ENCODE measurements at regions of chr1 and their contacts with region 1.

Region 1: GRCh38 chr1:227787513-227788270 is 27.8 kb upstream of the PRSS38 start:
- DNase-seq: peak; percentile 88 to 98 (median 93)
- H3K4me3 ChIP-seq: peak overlapping the region; percentile 73
- H3K4me3 Mint-ChIP-seq: peak overlapping the region; percentile 81 to 95 (median 86)
- H3K27ac ChIP-seq: peak overlapping the region; percentile 33
- H3K27ac Mint-ChIP-seq: peak overlapping the region; percentile 47 to 94 (median 78)
- H3K4me1 ChIP-seq: peaks cover 16% of the 10 kb centered on the region
- H3K4me1 Mint-ChIP-seq: peaks cover 5 to 29% (median 14%) of the 10 kb centered on the region in 3 donors
- H3K27me3 ChIP-seq: no peaks in the 10 kb centered on the region
- H3K27me3 Mint-ChIP-seq: no peaks in the 10 kb centered on the region

Region 2: DNA sequence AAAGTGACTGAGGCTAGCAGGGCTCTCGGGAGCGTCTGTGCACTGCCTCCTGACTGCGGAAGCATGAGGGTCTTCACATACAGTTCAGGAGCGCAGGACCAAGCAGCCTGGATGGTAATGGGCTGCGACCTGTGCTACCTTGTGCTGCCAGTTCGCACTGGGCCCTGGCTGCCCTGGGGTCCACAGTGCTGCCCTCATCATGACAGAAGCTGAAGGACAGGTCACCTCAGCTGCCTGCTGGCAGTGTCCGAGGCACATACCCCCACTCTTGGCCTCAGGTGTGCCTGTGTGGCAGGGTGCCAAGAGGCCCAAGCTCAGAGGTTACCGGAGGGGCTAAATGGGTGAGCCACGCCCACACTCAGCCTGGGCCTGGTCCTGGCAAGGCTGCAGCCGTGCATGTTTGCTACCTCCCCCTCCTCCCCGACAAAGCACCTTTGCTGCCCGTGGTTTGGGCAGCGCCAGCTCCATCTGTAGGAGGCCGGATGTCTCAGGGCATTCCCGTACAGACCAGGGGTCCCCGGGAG is 57.0 kb before region 1 on chr1:
- CTCF ChIA-PET with region 1: no interaction called
- POLR2A ChIA-PET with region 1: no interaction called
- DNase-seq: no peak
- H3K4me3 ChIP-seq: no peak overlapping the region
- H3K4me3 Mint-ChIP-seq: peak overlapping the region in 4 of 7 donors; percentile 62 to 86 (median 70)
- H3K27ac ChIP-seq: no peak overlapping the region
- H3K27ac Mint-ChIP-seq: peak overlapping the region in 4 of 8 donors; percentile 32 to 85 (median 60)
- H3K4me1 ChIP-seq: peaks cover 28% of the 10 kb centered on the region
- H3K4me1 Mint-ChIP-seq: peaks cover 25 to 50% (median 35%) of the 10 kb centered on the region in 3 donors
- H3K27me3 ChIP-seq: no peaks in the 10 kb centered on the region
- H3K27me3 Mint-ChIP-seq: no peaks in the 10 kb centered on the region

Region 3: DNA sequence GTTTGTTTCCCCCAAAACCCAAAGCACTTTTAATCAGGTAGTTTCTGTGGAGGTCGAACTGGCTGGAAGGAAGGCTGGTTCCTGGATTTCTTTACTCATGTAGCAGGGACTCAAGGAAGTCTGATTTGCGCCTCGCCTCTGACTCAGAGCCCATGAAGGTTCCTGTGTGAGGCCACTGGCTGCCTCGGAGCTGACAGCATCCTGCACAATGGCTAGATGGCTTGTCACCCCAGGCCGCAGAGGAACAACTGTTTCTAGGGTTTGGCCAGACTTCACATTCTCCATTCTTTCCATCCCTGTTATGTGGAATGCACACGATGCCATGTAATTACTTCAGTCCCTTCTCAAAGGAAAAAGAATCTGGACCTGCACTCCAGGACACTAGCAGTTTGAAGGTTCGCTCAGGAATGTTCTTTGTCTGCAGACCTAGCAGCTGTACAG is 11.3 kb before region 1 on chr1:
- CTCF ChIA-PET with region 1: interaction called, 13 read pairs
- POLR2A ChIA-PET with region 1: interaction called, 13 read pairs
- DNase-seq: no peak
- H3K4me3 ChIP-seq: no peak overlapping the region
- H3K4me3 Mint-ChIP-seq: peak overlapping the region in 4 of 7 donors; percentile 12 to 32 (median 14)
- H3K27ac ChIP-seq: no peak overlapping the region
- H3K27ac Mint-ChIP-seq: peak overlapping the region in 3 of 8 donors; percentile 22 to 63 (median 34)
- H3K4me1 ChIP-seq: peaks cover 29% of the 10 kb centered on the region
- H3K4me1 Mint-ChIP-seq: peaks cover 30 to 49% (median 30%) of the 10 kb centered on the region in 3 donors
- H3K27me3 ChIP-seq: no peaks in the 10 kb centered on the region
- H3K27me3 Mint-ChIP-seq: no peaks in the 10 kb centered on the region

Region 4: GRCh38 chr1:227823537-227823936 is 35.8 kb after region 1 on chr1:
- CTCF ChIA-PET with region 1: no interaction called
- POLR2A ChIA-PET with region 1: no interaction called
- DNase-seq: no peak
- H3K4me3 ChIP-seq: no peak overlapping the region
- H3K4me3 Mint-ChIP-seq: no peak overlapping the region
- H3K27ac ChIP-seq: no peak overlapping the region
- H3K27ac Mint-ChIP-seq: no peak overlapping the region
- H3K4me1 ChIP-seq: peaks cover 8% of the 10 kb centered on the region
- H3K4me1 Mint-ChIP-seq: peaks cover 19% of the 10 kb centered on the region in 3 donors
- H3K27me3 ChIP-seq: no peaks in the 10 kb centered on the region
- H3K27me3 Mint-ChIP-seq: peaks cover 12 to 15% of the 10 kb centered on the region in 2 donors